ENCODE measurements at regions of chr19 and their contacts with region 1.

Region 1: DNA sequence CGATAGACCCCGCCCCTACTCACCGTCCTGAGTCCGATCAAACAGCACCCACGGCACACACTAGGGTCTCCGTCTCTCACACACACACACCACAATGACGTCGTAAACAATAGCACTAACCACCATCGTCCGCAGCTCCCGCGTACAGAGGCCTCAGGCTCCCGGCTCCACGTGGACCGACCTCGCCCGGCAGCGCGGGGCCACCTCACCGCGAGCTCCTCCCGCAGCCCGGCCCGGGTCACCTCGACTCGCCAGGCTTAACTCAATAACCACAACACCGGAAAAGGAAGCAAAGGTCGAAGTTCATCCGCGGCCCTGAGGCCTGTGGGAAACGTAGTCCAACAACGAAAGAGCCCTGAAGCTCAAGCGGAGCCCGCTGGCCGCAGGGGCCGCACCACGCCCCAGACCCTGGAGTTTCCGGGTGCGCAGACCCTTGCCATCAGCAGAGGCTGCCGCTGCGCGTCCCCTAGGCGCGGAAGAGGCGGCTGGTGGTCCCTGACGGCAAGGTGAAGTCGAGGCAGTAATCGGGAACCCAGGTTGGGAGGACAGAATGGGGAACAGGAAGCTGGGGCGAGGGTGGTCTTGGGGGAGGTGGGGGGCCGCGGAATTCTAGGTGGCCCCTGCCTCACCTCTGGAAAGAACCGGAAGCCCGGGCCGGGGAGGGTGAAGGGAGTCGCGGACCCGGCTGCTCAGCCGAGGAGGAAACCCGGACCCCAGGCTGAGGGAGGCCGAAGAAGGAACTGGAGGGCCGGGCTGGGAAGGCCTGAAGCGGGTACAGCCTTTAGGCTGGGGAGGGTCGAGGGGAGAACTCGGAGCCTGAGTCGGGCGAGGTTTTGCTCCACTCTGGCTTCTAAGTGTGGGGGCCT is at the start of gene ZNF529:
- DNase-seq: peak; percentile 84 to 93 (median 89)
- H3K4me3 ChIP-seq: peak within 1 kb of the TSS; percentile 96
- H3K4me3 Mint-ChIP-seq: peak within 1 kb of the TSS; percentile 89 to 98 (median 93)
- H3K27ac ChIP-seq: peak within 1 kb of the TSS; percentile 99
- H3K27ac Mint-ChIP-seq: peak within 1 kb of the TSS; percentile 96 to 100 (median 98)
- H3K4me1 ChIP-seq: peaks cover 20% of the 10 kb centered on the region
- H3K4me1 Mint-ChIP-seq: peaks cover 50 to 58% (median 55%) of the 10 kb centered on the region in 3 donors
- H3K27me3 ChIP-seq: no peaks in the 10 kb centered on the region
- H3K27me3 Mint-ChIP-seq: peaks cover 0 to 4% of the 10 kb centered on the region in 2 donors
- total RNA-seq, gene ZNF529: 15.6 to 16.4 TPM

Region 2: GRCh38 chr19:36514012-36514612 is 59.1 kb before region 1 on chr19:
- CTCF ChIA-PET with region 1: no interaction called
- POLR2A ChIA-PET with region 1: no interaction called
- DNase-seq: no peak
- H3K4me3 ChIP-seq: peak overlapping the region; percentile 40
- H3K4me3 Mint-ChIP-seq: no peak overlapping the region
- H3K27ac ChIP-seq: no peak overlapping the region
- H3K27ac Mint-ChIP-seq: no peak overlapping the region
- H3K4me1 ChIP-seq: no peaks in the 10 kb centered on the region
- H3K4me1 Mint-ChIP-seq: peaks cover 0 to 9% (median 7%) of the 10 kb centered on the region in 3 donors
- H3K27me3 ChIP-seq: no peaks in the 10 kb centered on the region
- H3K27me3 Mint-ChIP-seq: no peaks in the 10 kb centered on the region

Region 3: DNA sequence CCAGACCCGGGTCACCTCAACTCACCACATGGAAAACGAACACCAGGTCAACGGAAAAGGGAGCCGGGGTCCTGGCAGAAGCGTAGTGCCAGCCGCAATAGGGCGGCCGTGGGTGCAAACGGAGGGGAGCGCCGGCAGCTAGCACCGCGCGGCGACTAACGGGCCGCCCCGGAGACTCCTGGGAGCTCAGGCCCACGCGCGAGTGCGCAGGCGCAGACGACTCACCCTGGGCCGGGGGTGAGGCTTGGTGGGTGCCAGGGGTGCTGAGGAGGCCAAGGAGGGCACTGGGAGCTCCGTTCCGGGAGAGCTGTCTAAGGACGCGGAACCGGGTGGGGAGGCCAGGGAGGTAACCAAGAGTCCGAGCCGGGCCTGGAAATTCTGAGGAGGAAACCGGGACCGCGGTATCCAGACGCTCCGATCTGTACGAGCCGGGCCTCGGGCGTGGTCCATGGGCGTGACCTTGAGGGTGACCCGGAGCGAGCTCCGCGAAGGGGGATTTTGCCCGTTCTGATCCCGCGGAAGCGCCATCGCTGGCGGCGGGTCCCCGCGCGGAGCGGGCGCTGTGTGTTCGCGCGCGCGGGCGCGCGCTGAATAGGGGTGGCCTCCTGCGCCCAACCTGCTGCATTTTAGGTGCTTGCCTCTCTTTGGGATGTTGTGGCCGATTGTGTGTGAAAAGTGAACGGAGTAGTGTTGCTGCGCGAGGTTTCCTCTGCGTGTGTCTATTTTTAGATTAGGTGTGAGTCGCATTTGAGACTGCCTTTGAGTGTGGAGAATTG is 32.0 kb after region 1 on chr19 and contains the start of gene ZNF382:
- CTCF ChIA-PET with region 1: interaction called, 3 read pairs
- POLR2A ChIA-PET with region 1: interaction called, 13 read pairs
- DNase-seq: peak; percentile 76 to 91 (median 81)
- H3K4me3 ChIP-seq: peak within 1 kb of the TSS; percentile 91
- H3K4me3 Mint-ChIP-seq: peak within 1 kb of the TSS; percentile 83 to 100 (median 89)
- H3K27ac ChIP-seq: peak within 1 kb of the TSS; percentile 93
- H3K27ac Mint-ChIP-seq: peak within 1 kb of the TSS; percentile 81 to 99 (median 93)
- H3K4me1 ChIP-seq: peaks cover 13% of the 10 kb centered on the region
- H3K4me1 Mint-ChIP-seq: peaks cover 27 to 31% (median 31%) of the 10 kb centered on the region in 3 donors
- H3K27me3 ChIP-seq: no peaks in the 10 kb centered on the region
- H3K27me3 Mint-ChIP-seq: no peaks in the 10 kb centered on the region
- total RNA-seq, gene ZNF382: 10.0 to 10.3 TPM